Activated naive CD4-positive, alpha-beta T cell treated with anti-CD3 and anti-CD28 coated beads, Interleukin-2, amount 10 ng/mL, durations not matched to agents 7 days and 5 days (primary cell): ENCODE measurements at regions of chr12 and their contacts with region 1.

Region 1: DNA sequence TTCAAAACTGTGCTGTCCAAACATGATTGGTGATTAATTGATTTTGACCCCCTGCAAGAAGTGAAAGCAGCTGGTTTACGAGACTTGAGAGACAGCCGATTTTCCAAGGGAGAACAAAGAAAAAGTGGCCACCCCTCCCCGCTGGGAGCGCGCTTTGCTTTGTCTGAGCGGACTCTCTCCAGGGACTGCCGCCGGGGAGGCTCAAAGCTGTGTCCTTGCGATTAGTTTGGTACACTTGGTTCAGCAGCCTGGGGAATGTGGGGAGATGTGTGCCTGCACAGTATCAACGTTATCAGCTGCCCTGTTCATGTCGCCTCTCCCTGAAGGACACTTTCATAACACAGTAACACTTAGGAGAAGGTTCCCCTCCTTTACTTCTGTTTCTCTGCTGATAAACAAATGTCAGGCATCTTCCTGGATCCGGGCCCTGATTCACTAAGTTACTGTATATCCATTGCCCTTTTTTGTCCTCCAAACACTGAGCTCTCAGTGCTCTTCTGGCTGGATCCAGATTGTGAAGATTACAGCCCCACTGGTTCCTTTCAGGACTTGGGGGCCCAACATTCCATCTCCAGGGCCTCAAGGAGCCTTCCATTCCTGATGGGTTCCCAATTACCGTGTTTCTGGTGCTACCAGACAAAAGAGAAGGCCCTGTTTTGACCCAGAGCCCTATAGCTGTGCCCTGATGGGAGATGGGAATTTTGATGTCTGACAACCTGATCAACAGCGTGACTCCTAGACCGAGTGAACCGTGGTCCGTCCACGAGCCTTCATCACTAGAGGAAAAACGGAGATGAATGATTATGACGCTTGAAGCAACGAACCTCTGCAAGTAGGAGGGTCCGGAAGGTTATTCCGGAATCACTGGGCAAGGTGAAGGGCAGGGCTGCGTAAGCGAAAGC is 31.7 kb upstream of the TUBA1C start:
- DNase-seq: no peak
- H3K4me3 Mint-ChIP-seq: peak overlapping the region; percentile 53
- H3K27ac Mint-ChIP-seq: peak overlapping the region; percentile 92
- H3K4me1 Mint-ChIP-seq: peaks cover 21% of the 10 kb centered on the region
- H3K27me3 Mint-ChIP-seq: peaks cover 29% of the 10 kb centered on the region

Region 2: DNA sequence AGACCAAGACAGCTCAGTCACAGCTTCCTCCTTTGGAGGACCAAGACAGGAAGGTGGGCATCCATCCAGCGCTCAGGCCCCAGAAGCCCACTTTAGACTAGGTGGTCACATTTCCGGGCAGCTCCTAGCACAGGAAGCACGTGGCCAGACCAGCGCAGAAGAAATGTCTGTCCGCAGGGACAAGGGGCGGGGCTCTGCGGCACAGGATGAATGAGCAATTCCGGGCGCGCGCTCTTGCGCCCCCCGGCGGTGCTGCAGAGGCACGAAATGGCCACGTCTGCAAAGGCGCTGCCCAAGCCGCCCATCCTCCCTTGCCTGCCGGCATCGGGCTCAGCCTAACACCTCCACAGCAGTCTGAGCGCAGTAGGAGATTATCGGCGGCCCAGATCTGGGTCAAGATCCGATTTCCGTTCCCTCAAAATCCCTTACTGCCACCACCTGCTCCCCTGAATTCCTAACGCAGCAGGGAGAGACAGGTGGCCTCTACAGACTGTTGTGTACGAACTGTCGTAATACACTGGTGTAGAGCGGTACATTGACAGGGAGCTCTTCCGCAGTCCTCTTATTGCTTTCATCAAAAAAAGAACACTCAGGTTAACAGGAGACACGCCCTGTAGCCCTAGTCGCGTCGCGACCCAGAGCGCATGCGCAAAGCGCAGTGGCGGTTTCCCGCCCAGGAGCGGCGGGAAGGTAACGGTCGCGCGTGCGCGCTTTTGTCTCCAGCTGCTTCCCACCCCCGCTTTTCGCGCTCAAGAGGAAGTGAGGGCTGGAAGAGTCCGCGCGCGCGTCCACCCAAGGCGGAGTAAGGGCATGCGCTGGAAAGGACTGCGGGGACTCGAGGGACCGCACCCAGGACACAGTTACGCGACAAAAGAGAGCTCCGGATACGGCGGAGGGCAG is 102.8 kb before region 1 on chr12:
- CTCF ChIA-PET with region 1: interaction called, 14 read pairs
- DNase-seq: peak; percentile 93
- H3K4me3 Mint-ChIP-seq: peak overlapping the region; percentile 96
- H3K27ac Mint-ChIP-seq: peak overlapping the region; percentile 99
- H3K4me1 Mint-ChIP-seq: peaks cover 56% of the 10 kb centered on the region
- H3K27me3 Mint-ChIP-seq: peaks cover 12% of the 10 kb centered on the region

Region 3: DNA sequence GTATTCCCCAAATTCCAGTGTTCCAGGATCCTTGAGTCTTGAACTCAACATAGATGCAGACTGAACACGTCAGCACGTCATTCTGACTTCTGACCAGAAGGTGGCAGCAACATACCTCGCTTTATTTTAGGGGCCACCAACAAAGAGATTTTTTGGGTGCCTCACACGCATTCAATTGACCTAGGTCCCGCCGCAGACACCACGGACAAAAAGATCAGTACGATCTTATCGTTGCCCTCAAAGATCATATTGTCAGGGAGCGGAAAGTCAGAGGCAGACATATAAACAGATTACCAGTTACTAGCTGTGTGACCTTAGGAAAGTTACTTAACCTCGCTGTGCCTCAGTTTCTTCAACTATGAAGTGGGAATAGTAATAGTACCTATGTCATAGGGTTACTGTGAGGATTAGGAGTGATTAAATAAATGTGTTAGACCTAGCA is 55.2 kb after region 1 on chr12:
- CTCF ChIA-PET with region 1: no interaction called
- DNase-seq: peak; percentile 84
- H3K4me3 Mint-ChIP-seq: no peak overlapping the region
- H3K27ac Mint-ChIP-seq: no peak overlapping the region
- H3K4me1 Mint-ChIP-seq: peaks cover 2% of the 10 kb centered on the region
- H3K27me3 Mint-ChIP-seq: peaks cover 81% of the 10 kb centered on the region